ENCODE measurements at regions of chr2 and their contacts with region 1.

Region 1: GRCh38 chr2:171687287-171688128 is at the start of gene DYNC1I2:
- DNase-seq: peak; percentile 96
- H3K4me3 ChIP-seq: peak within 1 kb of the TSS; percentile 55 to 91 (median 75)
- H3K27ac ChIP-seq: peak within 1 kb of the TSS; percentile 81 to 88 (median 85)
- H3K4me1 ChIP-seq: peaks cover 0 to 19% (median 16%) of the 10 kb centered on the region in 4 donors
- H3K27me3 ChIP-seq: no peaks in the 10 kb centered on the region
- CTCF ChIP-seq: peak in 1 of 4 experiments; percentile 16
- EP300 ChIP-seq: no peak
- POLR2A ChIP-seq: peak in 1 of 2 donors; percentile 31
- total RNA-seq, gene DYNC1I2: 103 to 133 (median 127) TPM

Region 2: DNA sequence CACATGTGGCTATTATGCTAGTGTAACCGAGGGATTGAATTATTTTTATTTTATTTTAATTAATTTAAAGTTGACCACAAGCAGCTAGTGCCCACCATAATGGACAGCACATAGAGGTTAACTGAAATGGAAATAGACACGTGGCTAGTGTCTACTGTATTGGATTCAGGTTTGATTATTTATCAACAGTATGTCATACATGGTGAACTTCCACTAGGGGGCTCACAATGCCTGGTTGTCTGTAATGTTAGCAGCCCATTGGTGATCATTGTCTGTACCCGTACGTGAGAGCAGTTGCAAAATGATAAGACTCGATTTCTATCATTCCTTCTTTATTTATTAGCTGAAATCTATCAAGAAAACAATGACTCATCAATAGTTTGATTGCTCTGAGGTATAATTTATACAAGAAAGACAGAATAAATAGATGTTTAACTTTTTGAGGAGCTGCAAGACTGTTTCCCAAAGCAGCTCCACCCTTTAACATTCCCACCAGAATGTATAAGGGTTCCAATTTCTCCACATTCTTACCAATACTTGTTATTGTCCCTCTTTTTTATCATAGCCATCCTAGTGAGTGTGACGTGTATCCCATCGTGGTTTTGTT is 88.7 kb before region 1 on chr2:
- intact Hi-C with region 1: no loop called
- DNase-seq: no peak
- H3K4me3 ChIP-seq: no peak overlapping the region
- H3K27ac ChIP-seq: no peak overlapping the region
- H3K4me1 ChIP-seq: no peaks in the 10 kb centered on the region
- H3K27me3 ChIP-seq: peaks cover 0 to 4% (median 4%) of the 10 kb centered on the region in 3 donors
- CTCF ChIP-seq: peak; percentile 11 to 69 (median 53)
- EP300 ChIP-seq: no peak
- POLR2A ChIP-seq: no peak

Region 3: GRCh38 chr2:171999604-172000469 is 312.3 kb after region 1 on chr2 and contains the start of gene METAP1D:
- intact Hi-C with region 1: loop called (anchors 5 kb)
- DNase-seq: peak; percentile 93
- H3K4me3 ChIP-seq: peak within 1 kb of the TSS; percentile 57 to 76 (median 62)
- H3K27ac ChIP-seq: peak within 1 kb of the TSS; percentile 47 to 65 (median 56)
- H3K4me1 ChIP-seq: peaks cover 0 to 13% (median 10%) of the 10 kb centered on the region in 4 donors
- H3K27me3 ChIP-seq: no peaks in the 10 kb centered on the region
- CTCF ChIP-seq: no peak
- EP300 ChIP-seq: no peak
- POLR2A ChIP-seq: no peak
- total RNA-seq, gene METAP1D: 7.8 to 14.4 (median 10.2) TPM